CD8-positive, alpha-beta memory T cell (primary cell): ENCODE measurements at regions of chr17 and their contacts with region 1.

Region 1: DNA sequence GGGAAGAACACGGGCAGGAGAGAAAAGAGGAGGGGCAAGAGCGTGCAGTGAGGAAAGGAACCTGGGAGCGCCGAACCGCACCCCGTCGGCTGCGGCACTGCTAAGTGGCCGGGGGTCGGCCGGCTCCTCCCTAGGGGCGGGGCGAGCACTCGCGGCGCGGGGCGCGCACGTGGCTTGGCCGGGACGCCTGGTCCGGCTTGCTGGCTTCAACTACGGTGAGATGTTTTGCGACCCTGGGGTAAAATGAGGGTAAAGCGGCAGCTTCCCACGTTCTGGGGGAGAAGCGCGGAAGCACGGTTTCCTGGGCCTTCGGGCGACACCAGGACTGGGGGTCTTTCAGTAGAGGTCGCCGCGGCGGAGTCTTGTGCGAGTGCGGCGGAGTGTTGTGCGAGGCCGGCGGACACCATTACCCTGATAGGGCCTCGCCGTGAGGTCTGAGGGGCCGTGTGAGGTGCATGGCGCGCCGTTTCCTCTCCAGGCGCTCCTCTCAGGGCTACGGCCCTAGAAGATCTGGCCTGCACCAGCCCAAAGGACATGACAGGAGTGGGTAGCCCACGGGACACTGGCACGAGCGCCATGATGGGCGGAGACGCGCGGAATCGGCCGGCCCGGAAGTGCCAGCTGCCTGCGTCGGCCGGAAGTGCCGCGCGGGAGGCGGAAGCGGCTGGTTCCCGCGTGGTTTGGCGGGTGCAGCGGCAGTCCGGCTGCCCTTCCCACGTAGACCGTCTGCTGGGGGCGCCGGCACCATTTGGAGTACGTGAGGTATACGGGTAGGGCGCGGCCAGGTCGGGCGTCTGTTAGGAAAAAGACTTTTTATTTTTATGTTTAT is at the starts of genes MYO19 and PIGW:
- DNase-seq: peak; percentile 78 to 88 (median 84)
- H3K4me3 ChIP-seq: peak within 1 kb of the TSS; percentile 87
- H3K4me3 Mint-ChIP-seq: peak within 1 kb of the TSS; percentile 92 to 99 (median 97)
- H3K27ac ChIP-seq: peak within 1 kb of the TSS; percentile 95
- H3K27ac Mint-ChIP-seq: peak within 1 kb of the TSS; percentile 94 to 99 (median 98)
- H3K4me1 ChIP-seq: peaks cover 16% of the 10 kb centered on the region
- H3K4me1 Mint-ChIP-seq: peaks cover 17 to 37% (median 21%) of the 10 kb centered on the region in 3 donors
- H3K27me3 ChIP-seq: no peaks in the 10 kb centered on the region
- H3K27me3 Mint-ChIP-seq: no peaks in the 10 kb centered on the region
- total RNA-seq, gene MYO19: 133 to 138 TPM
- total RNA-seq, gene PIGW: 42.2 to 43.0 TPM

Region 2: DNA sequence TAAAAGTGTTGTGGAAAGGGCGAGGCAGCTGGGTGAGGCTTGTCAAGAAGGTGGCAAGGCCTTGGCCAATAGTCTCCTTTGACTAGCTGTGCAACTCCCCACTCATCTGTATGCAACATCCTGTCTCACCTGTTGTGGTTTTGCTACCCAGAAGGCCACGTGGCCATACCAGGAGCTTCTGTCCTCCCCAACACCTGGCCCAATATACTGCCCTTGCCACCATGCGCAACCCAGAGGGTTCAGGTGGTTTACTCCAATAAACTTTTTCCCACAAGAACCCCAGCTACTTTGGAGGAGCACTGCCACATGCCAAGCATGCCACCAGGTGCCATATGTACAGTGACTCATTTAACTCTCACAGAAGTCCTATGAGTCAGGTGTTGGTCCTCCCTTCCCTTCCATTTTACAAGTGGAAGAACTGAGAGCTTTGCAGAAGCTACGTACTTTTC is 10.6 kb before region 1 on chr17:
- CTCF ChIA-PET with region 1: interaction called, 13 read pairs
- POLR2A ChIA-PET with region 1: no interaction called
- DNase-seq: no peak
- H3K4me3 ChIP-seq: no peak overlapping the region
- H3K4me3 Mint-ChIP-seq: no peak overlapping the region
- H3K27ac ChIP-seq: no peak overlapping the region
- H3K27ac Mint-ChIP-seq: peak overlapping the region in 3 of 8 donors; percentile 47 to 64 (median 52)
- H3K4me1 ChIP-seq: no peaks in the 10 kb centered on the region
- H3K4me1 Mint-ChIP-seq: peaks cover 8 to 12% (median 8%) of the 10 kb centered on the region in 3 donors
- H3K27me3 ChIP-seq: no peaks in the 10 kb centered on the region
- H3K27me3 Mint-ChIP-seq: no peaks in the 10 kb centered on the region

Region 3: GRCh38 chr17:36545465-36546417 is 10.7 kb after region 1 on chr17:
- CTCF ChIA-PET with region 1: interaction called, 24 read pairs
- POLR2A ChIA-PET with region 1: interaction called, 56 read pairs
- DNase-seq: peak; percentile 96 to 99 (median 97)
- H3K4me3 ChIP-seq: peak overlapping the region; percentile 93
- H3K4me3 Mint-ChIP-seq: peak overlapping the region; percentile 89 to 97 (median 92)
- H3K27ac ChIP-seq: peak overlapping the region; percentile 78
- H3K27ac Mint-ChIP-seq: peak overlapping the region; percentile 89 to 99 (median 96)
- H3K4me1 ChIP-seq: peaks cover 45% of the 10 kb centered on the region
- H3K4me1 Mint-ChIP-seq: peaks cover 39 to 58% (median 53%) of the 10 kb centered on the region in 3 donors
- H3K27me3 ChIP-seq: no peaks in the 10 kb centered on the region
- H3K27me3 Mint-ChIP-seq: peaks cover 0 to 4% of the 10 kb centered on the region in 2 donors

Region 4: DNA sequence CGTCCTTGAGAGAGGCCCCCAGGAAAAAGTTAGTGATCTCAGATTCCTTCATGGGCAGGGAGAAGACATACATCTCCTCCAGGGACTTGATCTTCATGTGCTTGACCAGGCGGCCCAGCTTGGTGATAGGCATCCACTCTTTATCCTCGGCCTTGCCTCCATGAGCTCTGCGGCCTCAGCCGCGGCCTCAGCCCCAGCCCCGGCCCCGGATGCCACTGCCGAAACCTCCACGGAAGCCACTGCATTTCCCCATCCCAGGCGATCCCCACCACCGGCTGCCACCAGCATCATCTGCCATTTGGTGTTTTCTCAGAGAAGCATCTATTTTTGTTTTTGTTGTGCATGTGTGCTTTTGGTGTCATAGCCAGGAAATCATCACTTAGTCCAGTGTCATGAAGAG is 40.0 kb after region 1 on chr17:
- CTCF ChIA-PET with region 1: no interaction called
- POLR2A ChIA-PET with region 1: no interaction called
- DNase-seq: no peak
- H3K4me3 ChIP-seq: no peak overlapping the region
- H3K4me3 Mint-ChIP-seq: peak overlapping the region in 1 of 7 donors; percentile 36
- H3K27ac ChIP-seq: no peak overlapping the region
- H3K27ac Mint-ChIP-seq: peak overlapping the region in 1 of 8 donors; percentile 15
- H3K4me1 ChIP-seq: no peaks in the 10 kb centered on the region
- H3K4me1 Mint-ChIP-seq: peaks cover 21 to 31% (median 28%) of the 10 kb centered on the region in 3 donors
- H3K27me3 ChIP-seq: no peaks in the 10 kb centered on the region
- H3K27me3 Mint-ChIP-seq: no peaks in the 10 kb centered on the region